Activated B cell treated with CpG ODN at 0.5 μM for 24 hours (primary cell): ENCODE measurements at regions of chr7 and their contacts with region 1.

Region 1: GRCh38 chr7:121204537-121204936 is 124.3 kb upstream of the WNT16 start:
- DNase-seq: no peak
- ATAC-seq: no peak
- H3K4me3 Mint-ChIP-seq: no peak overlapping the region
- H3K27ac Mint-ChIP-seq: no peak overlapping the region
- H3K4me1 Mint-ChIP-seq: peaks cover 42% of the 10 kb centered on the region
- H3K27me3 Mint-ChIP-seq: no peaks in the 10 kb centered on the region
- CTCF ChIP-seq: no peak

Region 2: GRCh38 chr7:121192834-121193233 is 11.7 kb before region 1 on chr7:
- CTCF ChIA-PET with region 1: interaction called, 3 read pairs
- POLR2A ChIA-PET with region 1: no interaction called
- intact Hi-C with region 1: loop called (anchors 1 kb)
- DNase-seq: no peak
- ATAC-seq: no peak
- H3K4me3 Mint-ChIP-seq: no peak overlapping the region
- H3K27ac Mint-ChIP-seq: no peak overlapping the region
- H3K4me1 Mint-ChIP-seq: peaks cover 35% of the 10 kb centered on the region
- H3K27me3 Mint-ChIP-seq: no peaks in the 10 kb centered on the region
- CTCF ChIP-seq: no peak

Region 3: DNA sequence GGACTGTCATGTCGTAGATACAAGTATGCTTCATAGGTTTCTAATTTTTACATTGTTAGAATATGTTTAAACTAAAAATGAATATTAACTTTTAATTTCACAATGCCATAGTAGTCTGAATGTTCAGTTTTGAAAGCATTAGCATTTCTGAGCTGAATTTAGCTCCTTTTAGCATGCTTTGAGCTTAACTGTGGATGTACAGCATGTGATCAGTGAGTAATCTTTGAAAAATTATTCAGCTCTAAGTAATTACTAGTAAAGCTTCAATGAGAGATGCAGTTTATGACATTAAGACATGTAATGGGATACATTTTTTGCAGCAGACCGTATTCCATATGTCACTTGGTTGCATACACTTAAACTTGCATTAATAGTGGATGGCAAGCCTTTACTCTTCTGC is 10.1 kb after region 1 on chr7:
- CTCF ChIA-PET with region 1: no interaction called
- POLR2A ChIA-PET with region 1: interaction called, 3 read pairs
- intact Hi-C with region 1: loop called (anchors 2 kb)
- DNase-seq: no peak
- ATAC-seq: no peak
- H3K4me3 Mint-ChIP-seq: no peak overlapping the region
- H3K27ac Mint-ChIP-seq: no peak overlapping the region
- H3K4me1 Mint-ChIP-seq: peaks cover 25% of the 10 kb centered on the region
- H3K27me3 Mint-ChIP-seq: no peaks in the 10 kb centered on the region
- CTCF ChIP-seq: no peak